Panc1 (cell line): ENCODE measurements at regions of chr1 and their contacts with region 1.

Region 1: GRCh38 chr1:206784471-206784903 is 12.2 kb upstream of the IL10 start:
- DNase-seq: no peak
- ATAC-seq: no peak
- H3K4me3 ChIP-seq: no peak overlapping the region
- H3K27ac ChIP-seq: no peak overlapping the region
- H3K4me1 ChIP-seq: no peaks in the 10 kb centered on the region
- H3K27me3 ChIP-seq: peaks cover 5% of the 10 kb centered on the region
- CTCF ChIP-seq: no peak

Region 2: GRCh38 chr1:206761159-206761768 is 23.2 kb before region 1 on chr1:
- CTCF ChIA-PET with region 1: interaction called, 11 read pairs
- POLR2A ChIA-PET with region 1: no interaction called
- in situ Hi-C with region 1: no loop called
- intact Hi-C with region 1: no loop called
- DNase-seq: no peak
- ATAC-seq: no peak
- H3K4me3 ChIP-seq: no peak overlapping the region
- H3K27ac ChIP-seq: no peak overlapping the region
- H3K4me1 ChIP-seq: no peaks in the 10 kb centered on the region
- H3K27me3 ChIP-seq: peaks cover 14% of the 10 kb centered on the region
- CTCF ChIP-seq: no peak

Region 3: DNA sequence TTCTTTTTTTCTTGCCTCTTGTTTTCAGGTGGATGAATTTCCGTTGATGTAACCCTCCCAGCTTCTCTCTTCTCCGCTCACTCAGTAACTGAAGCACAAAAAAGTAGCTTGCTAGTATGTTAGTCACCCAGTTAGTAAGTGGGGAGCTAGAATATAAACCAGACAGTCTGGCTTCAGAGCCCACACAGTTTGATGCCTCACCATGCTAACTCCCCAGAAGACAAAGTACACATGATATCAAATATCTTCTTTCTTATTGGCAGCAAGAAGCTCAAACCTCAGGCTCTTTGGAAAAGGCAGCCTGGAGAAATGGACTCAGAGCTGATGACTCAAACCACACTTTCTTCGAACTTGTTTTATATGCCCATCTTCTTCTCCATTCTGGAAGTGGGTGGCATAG is 1647.2 kb after region 1 on chr1:
- CTCF ChIA-PET with region 1: no interaction called
- POLR2A ChIA-PET with region 1: no interaction called
- in situ Hi-C with region 1: no loop called
- intact Hi-C with region 1: no loop called
- DNase-seq: no peak
- ATAC-seq: no peak
- H3K4me3 ChIP-seq: no peak overlapping the region
- H3K27ac ChIP-seq: no peak overlapping the region
- H3K4me1 ChIP-seq: no peaks in the 10 kb centered on the region
- H3K27me3 ChIP-seq: no peaks in the 10 kb centered on the region; the same call in 1 of the 2 replicates
- CTCF ChIP-seq: no peak